ENCODE measurements at regions of chr22 and their contacts with region 1.

Region 1: DNA sequence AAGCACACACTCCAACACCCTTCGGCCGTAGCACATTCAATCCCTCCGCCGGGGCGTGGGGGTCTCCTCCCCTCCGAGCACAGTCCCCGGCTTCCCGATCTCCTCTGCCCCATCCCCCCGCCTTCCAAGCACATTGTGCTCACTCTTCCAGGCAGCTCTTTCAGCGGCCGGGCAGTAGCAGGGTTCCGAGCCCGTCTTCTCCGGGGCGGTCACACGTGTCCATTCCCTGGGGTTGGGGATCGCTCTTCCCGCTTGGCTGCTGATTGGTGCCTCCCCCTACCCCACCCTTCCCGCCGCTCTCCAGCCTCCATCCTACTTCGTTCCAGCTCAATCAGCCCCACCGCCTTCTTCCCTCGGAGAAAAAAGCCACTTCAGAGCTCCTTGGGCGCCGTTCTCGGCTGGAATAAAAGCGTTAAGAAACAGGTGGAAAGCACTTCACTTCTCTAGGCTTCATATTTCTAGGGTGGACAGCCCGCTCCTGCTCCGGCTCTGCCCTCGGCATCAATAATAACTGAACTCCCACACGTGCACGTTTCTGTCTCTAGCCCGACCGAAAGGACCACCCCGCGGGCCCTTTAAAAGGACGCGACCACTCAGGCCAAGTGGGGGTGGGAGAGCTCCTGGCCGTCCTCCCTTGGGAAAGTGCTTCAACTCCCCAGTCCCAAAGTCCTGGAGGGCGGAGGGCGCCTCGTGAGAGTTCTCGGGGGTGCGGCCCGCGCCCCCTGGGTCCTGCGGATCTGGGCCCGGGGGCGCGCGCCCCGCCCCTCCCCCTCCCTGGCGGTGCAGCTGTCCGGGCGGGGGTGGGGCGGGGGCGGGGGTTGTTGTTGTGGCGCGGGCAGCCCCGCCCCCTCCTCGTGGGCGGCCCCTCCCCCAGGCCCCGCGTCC is 464 bp upstream of the CECR2 start:
- DNase-seq: no peak
- H3K4me3 Mint-ChIP-seq: peak overlapping the region; percentile 80
- H3K27ac Mint-ChIP-seq: peak overlapping the region; percentile 44
- H3K4me1 Mint-ChIP-seq: peaks cover 29% of the 10 kb centered on the region
- H3K27me3 Mint-ChIP-seq: peaks cover 61% of the 10 kb centered on the region

Region 2: DNA sequence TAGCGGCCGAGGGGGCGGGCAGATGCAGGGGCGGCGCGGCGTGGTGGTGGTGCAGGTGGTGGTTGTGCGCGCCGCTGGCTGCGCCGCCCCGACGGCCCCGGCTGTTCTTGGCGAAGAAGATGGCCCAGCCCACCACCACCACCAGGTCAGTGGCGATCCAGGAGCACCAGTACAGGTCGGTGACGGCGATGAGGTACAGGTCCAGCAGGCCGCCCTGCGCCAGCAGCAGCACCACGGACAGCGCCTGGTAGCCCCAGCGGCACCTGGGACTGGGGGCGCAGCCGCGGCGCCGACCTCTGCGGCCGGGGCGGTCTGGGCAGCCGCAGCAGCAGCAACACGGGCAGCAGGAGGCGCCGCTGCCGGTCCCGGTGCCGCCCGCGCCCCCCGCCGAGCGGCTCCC is 248.5 kb before region 1 on chr22:
- intact Hi-C with region 1: loop called (anchors 10 kb)
- DNase-seq: peak; percentile 42
- H3K4me3 Mint-ChIP-seq: no peak overlapping the region
- H3K27ac Mint-ChIP-seq: no peak overlapping the region
- H3K4me1 Mint-ChIP-seq: peaks cover 39% of the 10 kb centered on the region
- H3K27me3 Mint-ChIP-seq: peaks cover 25% of the 10 kb centered on the region

Region 3: GRCh38 chr22:17281440-17281841 is 87.4 kb before region 1 on chr22:
- intact Hi-C with region 1: loop called (anchors 2 kb)
- DNase-seq: peak; percentile 51
- H3K4me3 Mint-ChIP-seq: peak overlapping the region; percentile 77
- H3K27ac Mint-ChIP-seq: peak overlapping the region; percentile 97
- H3K4me1 Mint-ChIP-seq: peaks cover 31% of the 10 kb centered on the region
- H3K27me3 Mint-ChIP-seq: peaks cover 6% of the 10 kb centered on the region

Region 4: DNA sequence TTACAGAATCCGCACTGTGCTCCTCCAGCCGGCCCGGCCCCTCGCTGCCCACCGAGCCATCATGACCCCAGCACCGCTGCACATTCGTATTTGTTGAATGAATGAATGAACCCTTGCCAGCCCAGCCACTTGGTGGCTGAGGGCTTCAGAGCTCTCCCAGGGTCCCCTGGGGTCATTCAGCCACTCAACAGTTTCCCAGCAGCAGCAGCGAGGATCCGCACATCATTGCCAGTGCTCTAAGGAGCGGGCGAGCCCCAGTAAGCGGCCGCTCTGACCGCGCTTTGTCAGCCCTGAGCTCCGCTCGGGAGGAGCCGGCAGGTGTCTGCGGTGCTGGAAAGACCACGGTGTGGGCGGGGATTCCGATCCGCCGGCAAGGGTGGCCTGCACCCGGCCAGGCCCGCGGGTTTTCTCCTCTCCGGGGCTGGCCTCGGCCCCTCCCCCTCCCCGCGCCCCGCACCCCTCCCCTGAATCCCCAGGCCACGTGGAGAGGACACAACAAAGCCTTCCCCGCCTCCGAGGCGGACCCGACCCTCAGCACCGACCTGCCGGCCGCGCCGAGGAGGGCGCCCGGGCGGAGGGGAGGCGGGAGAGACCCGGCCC is 404.9 kb after region 1 on chr22:
- intact Hi-C with region 1: loop called (anchors 5 kb)
- DNase-seq: peak; percentile 67
- H3K4me3 Mint-ChIP-seq: peak overlapping the region; percentile 79
- H3K27ac Mint-ChIP-seq: peak overlapping the region; percentile 65
- H3K4me1 Mint-ChIP-seq: peaks cover 63% of the 10 kb centered on the region
- H3K27me3 Mint-ChIP-seq: peaks cover 14% of the 10 kb centered on the region

Measured in activated T-helper 1 cell treated with anti-CD3 and anti-CD28 coated beads, Interleukin-12 subunit alpha, Interleukin-12 subunit beta, Interleukin-2, Interleukin-4 antibody, amounts not matched to agents 30 ng/mL and 10 ng/mL and 1 ng/mL, durations not matched to agents 14 hours and 24 hours and 36 hours (primary cell).